AG04450 (cell line): ENCODE measurements at regions of chr3 and their contacts with region 1.

Region 1: GRCh38 chr3:53130179-53131061 is at the start of gene RFT1:
- DNase-seq: peak; percentile 84
- H3K4me3 ChIP-seq: peak within 1 kb of the TSS; percentile 96
- H3K27ac ChIP-seq: peak within 1 kb of the TSS; percentile 82
- H3K27me3 ChIP-seq: no peaks in the 10 kb centered on the region
- CTCF ChIP-seq: peak; percentile 15
- polyA plus RNA-seq, gene RFT1: 24.7 and 26.4 TPM in 2 replicates

Region 2: DNA sequence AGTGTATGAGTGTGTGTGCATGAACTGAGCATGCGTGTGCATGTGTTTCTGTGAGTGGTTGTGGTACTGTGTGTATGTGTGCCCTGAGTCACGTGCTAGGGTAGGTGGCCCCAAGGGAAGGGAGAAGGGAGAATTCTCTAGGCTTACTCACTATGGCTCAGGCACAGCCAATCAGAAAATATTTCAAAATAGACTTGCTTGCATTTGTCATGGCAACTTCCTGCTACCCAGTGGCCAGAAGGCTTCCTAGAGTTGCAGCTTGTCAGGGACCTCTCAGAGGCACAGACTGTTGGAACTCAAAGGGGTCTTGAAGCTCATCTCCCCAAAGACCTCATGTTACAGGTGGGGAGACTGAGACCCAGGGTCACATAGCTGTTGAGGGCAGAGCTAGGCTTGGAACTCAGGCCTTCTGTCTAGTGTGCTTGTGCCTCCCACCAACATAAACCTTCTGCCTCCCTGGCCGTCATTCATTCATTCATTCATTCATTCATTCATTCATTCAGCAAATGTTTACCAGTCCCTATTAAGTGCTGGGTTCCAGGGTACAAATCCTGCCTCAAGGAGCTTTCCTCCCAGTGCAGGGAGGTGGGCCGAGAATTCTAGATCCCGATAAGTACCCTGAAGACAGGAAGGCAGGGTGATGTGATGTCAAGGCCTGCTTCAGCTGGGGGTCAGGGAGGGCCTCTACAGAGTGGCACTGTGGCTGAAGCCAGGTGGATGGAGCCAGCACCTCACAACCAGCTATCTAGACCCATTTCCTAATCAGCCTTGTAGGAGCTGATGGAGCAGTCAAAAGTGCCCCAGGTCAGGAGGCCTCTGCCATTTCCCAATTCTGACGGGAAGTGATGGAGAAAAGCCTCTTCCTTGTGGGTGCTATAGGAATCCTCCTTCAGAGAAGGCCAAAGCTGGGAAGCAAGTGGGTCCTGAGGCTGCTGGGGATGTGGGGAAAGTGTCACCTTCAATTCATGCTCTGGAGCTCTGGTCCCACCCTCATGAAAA is 10.7 kb after region 1 on chr3:
- CTCF ChIA-PET with region 1: interaction called, 10 read pairs
- POLR2A ChIA-PET with region 1: no interaction called
- DNase-seq: no peak
- H3K4me3 ChIP-seq: no peak overlapping the region
- H3K27ac ChIP-seq: no peak overlapping the region
- H3K27me3 ChIP-seq: no peaks in the 10 kb centered on the region
- CTCF ChIP-seq: no peak

Region 3: DNA sequence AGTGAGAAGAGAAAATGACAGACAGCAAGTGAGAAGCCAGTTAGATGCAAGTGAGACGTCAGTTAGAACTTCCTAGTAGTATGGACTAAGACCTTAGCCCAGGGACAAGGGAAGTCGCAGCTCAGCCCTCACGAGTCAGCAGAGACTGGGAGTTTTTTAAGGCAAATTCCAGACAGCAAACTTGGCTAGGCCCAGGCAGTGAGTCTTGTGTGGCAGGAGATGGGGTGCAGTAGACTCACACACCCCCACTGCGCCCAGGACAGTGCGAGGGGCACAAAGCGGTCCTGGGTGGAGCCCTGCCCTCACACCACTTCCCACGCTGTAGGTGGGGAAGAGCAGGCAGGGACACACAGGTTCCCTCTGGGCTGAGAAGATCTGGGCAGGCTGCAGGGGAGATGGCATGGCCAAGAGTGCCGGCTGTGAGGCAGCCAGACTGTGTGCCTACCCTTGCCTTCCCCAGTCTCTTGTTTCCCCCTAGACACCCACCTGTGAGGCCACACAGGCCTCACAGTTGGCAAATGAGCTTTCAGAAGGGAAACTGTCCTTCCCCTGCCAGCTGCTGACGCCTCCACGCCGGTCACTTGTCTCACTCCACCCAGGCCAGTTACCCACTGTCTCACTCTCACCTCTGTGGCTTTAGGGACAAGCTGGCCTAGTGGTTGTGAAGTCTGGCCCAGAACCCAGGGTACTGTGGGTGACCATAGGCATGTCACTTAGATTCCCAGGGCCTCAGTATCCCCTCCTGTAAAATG is 16.9 kb after region 1 on chr3:
- CTCF ChIA-PET with region 1: interaction called, 13 read pairs
- POLR2A ChIA-PET with region 1: no interaction called
- DNase-seq: no peak
- H3K4me3 ChIP-seq: no peak overlapping the region
- H3K27ac ChIP-seq: no peak overlapping the region
- H3K27me3 ChIP-seq: no peaks in the 10 kb centered on the region
- CTCF ChIP-seq: no peak